Naive thymus-derived CD4-positive, alpha-beta T cell (primary cell): ENCODE measurements at regions of chr5 and their contacts with region 1.

Region 1: DNA sequence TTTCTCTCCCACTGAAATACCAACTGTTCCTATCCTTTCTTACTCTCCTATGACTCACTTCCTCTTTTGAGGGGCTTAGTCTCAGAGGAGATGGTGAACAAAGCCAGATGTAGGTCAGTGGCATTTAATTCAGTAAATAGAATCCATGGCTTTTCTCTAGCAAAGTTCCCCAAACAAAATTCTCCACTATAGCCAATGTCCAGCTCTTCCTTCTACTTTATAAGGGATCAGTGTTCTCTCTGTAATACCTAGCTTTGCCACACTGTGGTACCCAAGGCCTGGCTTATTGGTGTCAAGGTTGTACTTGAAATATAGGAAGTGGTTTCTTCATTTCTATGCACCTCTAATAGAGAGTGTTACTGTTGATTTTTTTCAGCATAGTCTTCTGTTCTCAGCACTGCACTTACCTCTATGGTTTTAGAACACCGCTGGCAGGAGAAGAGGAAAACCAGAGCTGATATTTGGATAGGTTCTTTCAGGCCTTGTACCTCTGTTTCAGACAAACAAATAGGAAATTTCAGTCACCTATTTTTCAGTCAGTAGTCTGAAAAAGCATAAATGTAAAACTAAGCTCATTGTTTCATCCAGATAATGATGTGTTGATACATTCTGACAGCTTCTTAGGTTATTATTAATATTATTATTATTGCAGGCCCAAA is 40.6 kb upstream of the ITGA2 start:
- DNase-seq: peak; percentile 7 to 76 (median 59)
- ATAC-seq: peak; percentile 99
- H3K4me3 ChIP-seq: no peak overlapping the region
- H3K4me3 Mint-ChIP-seq: no peak overlapping the region
- H3K27ac ChIP-seq: no peak overlapping the region
- H3K27ac Mint-ChIP-seq: peak overlapping the region in 2 of 9 donors; percentile 7 to 18
- H3K4me1 ChIP-seq: no peaks in the 10 kb centered on the region
- H3K4me1 Mint-ChIP-seq: peaks cover 4 to 29% (median 16%) of the 10 kb centered on the region in 7 donors
- H3K27me3 ChIP-seq: no peaks in the 10 kb centered on the region
- H3K27me3 Mint-ChIP-seq: peaks cover 0 to 4% (median 0%) of the 10 kb centered on the region in 5 donors

Region 2: DNA sequence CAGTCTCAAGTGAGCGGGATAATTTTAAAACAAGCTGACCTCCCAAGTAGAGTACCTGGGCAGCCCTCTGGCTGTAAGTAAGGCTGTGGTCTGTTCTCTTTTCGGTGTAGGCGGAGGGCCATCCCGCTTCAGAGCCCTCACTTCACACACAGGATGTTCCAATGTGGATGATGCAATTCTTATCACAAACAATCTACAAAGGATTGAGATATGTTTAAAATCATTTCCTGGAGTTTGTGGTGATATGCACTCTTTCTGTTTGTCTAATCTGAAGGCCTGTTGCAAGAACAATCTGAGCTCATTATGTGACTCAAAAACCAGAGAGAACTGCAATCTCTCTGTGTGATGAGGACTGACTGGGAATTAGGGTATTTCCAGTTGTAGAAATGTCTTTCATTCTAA is 83.1 kb after region 1 on chr5:
- CTCF ChIA-PET with region 1: interaction called, 3 read pairs
- POLR2A ChIA-PET with region 1: interaction called, 3 read pairs
- intact Hi-C with region 1: loop called in 1 of 2 experiments (anchors 1 kb)
- DNase-seq: peak in 8 of 9 donors; percentile 25 to 68 (median 60)
- ATAC-seq: peak; percentile 89
- H3K4me3 ChIP-seq: no peak overlapping the region
- H3K4me3 Mint-ChIP-seq: peak overlapping the region in 8 of 10 donors; percentile 0 to 79 (median 60)
- H3K27ac ChIP-seq: peak overlapping the region; percentile 44
- H3K27ac Mint-ChIP-seq: peak overlapping the region; percentile 53 to 89 (median 81)
- H3K4me1 ChIP-seq: peaks cover 0 to 18% of the 10 kb centered on the region in 2 donors
- H3K4me1 Mint-ChIP-seq: peaks cover 12 to 55% (median 29%) of the 10 kb centered on the region in 7 donors
- H3K27me3 ChIP-seq: no peaks in the 10 kb centered on the region
- H3K27me3 Mint-ChIP-seq: no peaks in the 10 kb centered on the region

Region 3: DNA sequence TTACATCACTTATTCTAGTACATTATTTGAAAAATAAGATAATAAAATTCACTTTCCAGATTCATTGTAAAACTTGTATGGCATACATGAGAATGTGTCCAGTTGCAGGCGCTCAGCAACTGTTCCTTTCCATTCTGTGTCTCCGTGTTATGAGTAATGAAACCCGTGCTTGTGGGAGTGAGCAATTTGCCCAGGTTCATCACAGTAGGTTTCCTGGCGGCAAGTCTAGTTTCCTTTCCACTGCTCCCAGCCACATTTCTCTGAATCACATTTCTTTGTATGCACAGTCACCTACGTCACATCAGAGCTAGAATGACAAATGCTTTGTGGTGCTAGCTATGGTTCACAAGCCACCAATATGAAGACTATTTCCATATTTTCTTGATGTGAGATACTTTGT is 121.1 kb after region 1 on chr5:
- CTCF ChIA-PET with region 1: no interaction called
- POLR2A ChIA-PET with region 1: no interaction called
- intact Hi-C with region 1: loop called in 1 of 2 experiments (anchors 1 kb)
- DNase-seq: peak in 1 of 9 donors; percentile 65
- ATAC-seq: no peak
- H3K4me3 ChIP-seq: no peak overlapping the region
- H3K4me3 Mint-ChIP-seq: peak overlapping the region in 1 of 10 donors; percentile 80
- H3K27ac ChIP-seq: no peak overlapping the region
- H3K27ac Mint-ChIP-seq: peak overlapping the region in 1 of 9 donors; percentile 75
- H3K4me1 ChIP-seq: no peaks in the 10 kb centered on the region
- H3K4me1 Mint-ChIP-seq: peaks cover 0 to 42% (median 0%) of the 10 kb centered on the region in 7 donors
- H3K27me3 ChIP-seq: no peaks in the 10 kb centered on the region
- H3K27me3 Mint-ChIP-seq: peaks cover 0 to 7% (median 0%) of the 10 kb centered on the region in 5 donors

Region 4: GRCh38 chr5:53095931-53096525 is 147.5 kb after region 1 on chr5:
- CTCF ChIA-PET with region 1: interaction called, 106 read pairs
- POLR2A ChIA-PET with region 1: interaction called, 8 read pairs
- intact Hi-C with region 1: loop called (anchors 1 kb)
- DNase-seq: peak; percentile 17 to 69 (median 59)
- ATAC-seq: peak; percentile 96
- H3K4me3 ChIP-seq: no peak overlapping the region
- H3K4me3 Mint-ChIP-seq: no peak overlapping the region
- H3K27ac ChIP-seq: no peak overlapping the region
- H3K27ac Mint-ChIP-seq: peak overlapping the region in 3 of 9 donors; percentile 41 to 64 (median 53)
- H3K4me1 ChIP-seq: no peaks in the 10 kb centered on the region
- H3K4me1 Mint-ChIP-seq: peaks cover 0 to 28% (median 3%) of the 10 kb centered on the region in 7 donors
- H3K27me3 ChIP-seq: no peaks in the 10 kb centered on the region
- H3K27me3 Mint-ChIP-seq: no peaks in the 10 kb centered on the region

Region 5: GRCh38 chr5:53481887-53482716 is 533.6 kb after region 1 on chr5:
- CTCF ChIA-PET with region 1: interaction called, 3 read pairs
- POLR2A ChIA-PET with region 1: no interaction called
- intact Hi-C with region 1: loop called (anchors 5 kb)
- DNase-seq: peak; percentile 34 to 73 (median 50)
- ATAC-seq: peak; percentile 78
- H3K4me3 ChIP-seq: peak overlapping the region; percentile 67
- H3K4me3 Mint-ChIP-seq: peak overlapping the region; percentile 86 to 99 (median 90)
- H3K27ac ChIP-seq: no peak overlapping the region
- H3K27ac Mint-ChIP-seq: peak overlapping the region; percentile 25 to 93 (median 74)
- H3K4me1 ChIP-seq: peaks cover 10 to 11% of the 10 kb centered on the region in 2 donors
- H3K4me1 Mint-ChIP-seq: peaks cover 34 to 46% (median 42%) of the 10 kb centered on the region in 7 donors
- H3K27me3 ChIP-seq: peaks cover 0 to 13% of the 10 kb centered on the region in 2 donors
- H3K27me3 Mint-ChIP-seq: peaks cover 48 to 80% (median 61%) of the 10 kb centered on the region in 5 donors

Region 6: GRCh38 chr5:54229041-54229780 is 1280.7 kb after region 1 on chr5:
- CTCF ChIA-PET with region 1: interaction called, 14 read pairs
- POLR2A ChIA-PET with region 1: no interaction called
- intact Hi-C with region 1: loop called in 1 of 2 experiments (anchors 1 kb)
- DNase-seq: peak; percentile 32 to 70 (median 62)
- ATAC-seq: peak; percentile 89
- H3K4me3 ChIP-seq: no peak overlapping the region
- H3K4me3 Mint-ChIP-seq: peak overlapping the region in 1 of 10 donors; percentile 14
- H3K27ac ChIP-seq: no peak overlapping the region
- H3K27ac Mint-ChIP-seq: peak overlapping the region in 1 of 9 donors; percentile 10
- H3K4me1 ChIP-seq: peaks cover 0 to 4% of the 10 kb centered on the region in 2 donors
- H3K4me1 Mint-ChIP-seq: peaks cover 3 to 39% (median 18%) of the 10 kb centered on the region in 7 donors
- H3K27me3 ChIP-seq: no peaks in the 10 kb centered on the region
- H3K27me3 Mint-ChIP-seq: peaks cover 0 to 8% (median 0%) of the 10 kb centered on the region in 5 donors